CD8-positive, alpha-beta memory T cell (primary cell): ENCODE measurements at regions of chr6 and their contacts with region 1.

Region 1: DNA sequence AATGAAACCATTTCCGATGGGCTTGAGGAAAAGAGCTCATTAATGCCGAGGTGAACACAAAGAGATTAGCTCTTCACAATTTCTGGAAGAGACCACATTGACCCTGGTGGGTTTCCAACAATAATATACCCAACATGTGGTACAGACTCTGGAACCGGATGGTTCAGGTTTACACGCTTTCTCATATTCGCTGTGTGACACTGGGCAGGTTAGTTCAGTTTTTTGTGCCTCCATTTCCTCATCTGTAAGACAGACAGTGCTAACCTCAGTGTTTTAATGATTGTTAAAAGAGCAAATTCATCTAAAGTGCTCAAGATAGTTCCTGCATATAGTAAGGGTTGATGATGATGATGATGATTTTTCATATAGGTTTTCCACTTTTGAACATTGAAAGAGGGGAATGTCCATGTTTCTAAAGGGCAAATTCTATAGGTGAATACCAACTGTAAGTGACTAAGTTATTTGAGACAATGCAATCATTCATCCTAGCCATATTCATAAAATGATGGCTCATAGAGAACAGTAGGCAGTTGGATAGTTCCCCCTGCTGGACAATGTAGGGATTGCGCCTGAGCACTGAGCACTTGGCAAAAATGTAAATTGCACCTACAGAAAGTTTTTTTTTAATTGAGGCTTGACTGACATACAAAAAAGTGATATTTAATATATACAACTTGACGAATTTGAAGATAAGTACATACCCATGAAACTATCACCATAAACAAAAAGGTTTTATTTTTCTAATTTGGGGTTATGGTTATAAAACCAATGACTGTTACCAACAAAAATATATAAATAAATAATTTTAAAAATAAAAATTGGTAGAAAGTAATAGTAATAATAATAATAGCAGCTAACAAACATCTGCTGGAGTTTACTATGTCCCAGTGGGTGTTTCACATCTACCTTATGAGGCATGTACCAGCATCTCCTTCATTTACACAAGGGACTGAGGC is 2.1 kb upstream of the PERP start:
- DNase-seq: peak; percentile 59 to 78 (median 68)
- H3K4me3 ChIP-seq: no peak overlapping the region
- H3K4me3 Mint-ChIP-seq: peak overlapping the region in 3 of 7 donors; percentile 24 to 74 (median 33)
- H3K27ac ChIP-seq: no peak overlapping the region
- H3K27ac Mint-ChIP-seq: peak overlapping the region in 5 of 8 donors; percentile 1 to 70 (median 18)
- H3K4me1 ChIP-seq: peaks cover 13% of the 10 kb centered on the region
- H3K4me1 Mint-ChIP-seq: peaks cover 22 to 40% (median 22%) of the 10 kb centered on the region in 3 donors
- H3K27me3 ChIP-seq: peaks cover 10% of the 10 kb centered on the region
- H3K27me3 Mint-ChIP-seq: peaks cover 5 to 9% of the 10 kb centered on the region in 2 donors

Region 2: DNA sequence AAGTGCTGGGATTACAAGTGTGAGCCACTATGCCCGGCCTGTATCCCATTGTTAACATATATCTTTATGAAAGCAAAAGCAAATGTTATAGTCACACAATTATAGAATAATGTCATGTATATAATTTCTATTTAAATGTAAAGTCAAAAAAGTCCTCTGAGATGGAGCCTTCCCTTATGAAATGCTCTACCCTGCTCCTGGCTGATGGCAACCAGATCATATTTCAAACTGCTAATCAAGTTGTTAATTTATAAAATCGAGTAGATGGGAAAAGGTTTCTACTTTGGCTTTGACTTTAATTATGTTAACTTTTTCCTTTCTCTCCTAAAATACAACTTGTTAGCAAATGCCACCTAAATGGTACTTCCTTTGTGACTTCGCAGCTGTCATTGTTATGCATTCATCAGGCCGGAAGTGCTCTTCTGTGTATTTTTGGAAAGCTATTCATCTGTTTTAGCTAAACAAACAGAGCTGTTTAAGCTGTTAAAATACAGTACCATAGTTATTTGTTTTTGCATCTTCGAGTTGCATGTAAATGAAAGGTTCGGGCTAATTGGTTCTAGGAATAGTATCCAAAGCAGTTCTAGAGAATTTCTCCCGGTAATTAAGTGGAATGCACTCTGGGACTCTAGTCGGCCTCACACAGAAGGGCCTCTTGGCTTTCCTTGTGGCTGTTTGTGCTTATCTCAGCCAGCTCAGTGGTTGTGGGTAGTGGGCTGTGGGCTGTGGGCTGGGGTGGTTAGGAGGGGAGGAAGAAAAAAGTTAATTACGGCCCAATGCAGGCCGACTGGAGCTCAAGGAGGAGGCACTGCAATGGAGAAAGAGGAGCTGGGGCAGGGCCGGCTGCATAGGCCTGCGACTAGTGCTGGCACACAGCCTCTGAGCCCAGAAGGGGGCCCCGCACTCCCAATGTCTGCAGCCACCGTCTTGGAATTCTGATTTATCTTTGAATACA is 1152.5 kb before region 1 on chr6:
- CTCF ChIA-PET with region 1: no interaction called
- POLR2A ChIA-PET with region 1: no interaction called
- DNase-seq: no peak
- H3K4me3 ChIP-seq: no peak overlapping the region
- H3K4me3 Mint-ChIP-seq: peak overlapping the region in 1 of 7 donors; percentile 69
- H3K27ac ChIP-seq: no peak overlapping the region
- H3K27ac Mint-ChIP-seq: no peak overlapping the region
- H3K4me1 ChIP-seq: no peaks in the 10 kb centered on the region
- H3K4me1 Mint-ChIP-seq: peaks cover 0 to 5% (median 3%) of the 10 kb centered on the region in 3 donors
- H3K27me3 ChIP-seq: no peaks in the 10 kb centered on the region
- H3K27me3 Mint-ChIP-seq: peaks cover 14 to 44% of the 10 kb centered on the region in 2 donors

Region 3: DNA sequence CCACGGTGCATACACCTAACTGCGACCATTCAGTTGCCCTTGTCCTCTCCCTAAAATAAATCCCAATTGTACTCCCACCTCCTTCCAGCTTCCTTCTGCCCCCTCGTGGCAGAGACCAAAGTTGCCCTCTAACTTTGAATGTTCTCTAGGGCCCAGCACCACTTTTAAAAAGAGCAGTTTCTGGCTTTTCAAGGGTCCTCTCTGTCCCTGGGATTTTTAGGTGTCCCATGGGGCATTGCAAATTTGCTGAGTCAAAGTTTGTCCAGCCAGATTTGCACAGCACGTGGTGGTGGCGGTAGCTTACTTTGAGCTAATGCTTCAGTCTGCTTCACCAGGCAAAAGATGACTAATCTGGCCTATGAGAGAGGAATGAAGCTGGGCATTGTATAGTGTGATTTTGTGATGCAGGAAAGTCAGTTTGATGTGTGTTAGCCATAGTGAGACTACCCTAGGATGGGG is 102.3 kb before region 1 on chr6:
- CTCF ChIA-PET with region 1: interaction called, 60 read pairs
- POLR2A ChIA-PET with region 1: no interaction called
- DNase-seq: no peak
- H3K4me3 ChIP-seq: no peak overlapping the region
- H3K4me3 Mint-ChIP-seq: no peak overlapping the region
- H3K27ac ChIP-seq: no peak overlapping the region
- H3K27ac Mint-ChIP-seq: peak overlapping the region in 1 of 8 donors; percentile 8
- H3K4me1 ChIP-seq: no peaks in the 10 kb centered on the region
- H3K4me1 Mint-ChIP-seq: peaks cover under 1% of the 10 kb centered on the region in 3 donors
- H3K27me3 ChIP-seq: no peaks in the 10 kb centered on the region
- H3K27me3 Mint-ChIP-seq: peaks cover 0 to 2% of the 10 kb centered on the region in 2 donors

Region 4: DNA sequence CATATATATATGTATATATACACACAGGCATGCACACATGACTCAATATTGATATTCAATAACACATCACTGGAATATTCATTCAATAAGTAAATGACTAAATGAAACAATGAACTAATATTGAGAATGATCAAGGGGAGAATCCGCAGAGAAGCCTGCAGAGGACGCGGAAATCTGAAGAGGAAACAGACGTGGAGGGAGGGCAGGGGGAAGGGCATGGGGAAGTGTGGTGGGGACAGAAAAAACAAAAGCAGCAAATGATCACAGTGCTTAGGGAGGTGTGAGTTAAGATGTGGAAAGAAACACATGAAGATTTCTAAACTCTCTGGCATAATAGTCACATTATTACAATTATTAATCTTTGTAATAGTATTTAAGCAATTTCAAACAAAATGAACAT is 16.6 kb before region 1 on chr6:
- CTCF ChIA-PET with region 1: no interaction called
- POLR2A ChIA-PET with region 1: no interaction called
- DNase-seq: no peak
- H3K4me3 ChIP-seq: no peak overlapping the region
- H3K4me3 Mint-ChIP-seq: no peak overlapping the region
- H3K27ac ChIP-seq: no peak overlapping the region
- H3K27ac Mint-ChIP-seq: no peak overlapping the region
- H3K4me1 ChIP-seq: no peaks in the 10 kb centered on the region
- H3K4me1 Mint-ChIP-seq: no peaks in the 10 kb centered on the region
- H3K27me3 ChIP-seq: no peaks in the 10 kb centered on the region
- H3K27me3 Mint-ChIP-seq: peaks cover 0 to 1% of the 10 kb centered on the region in 2 donors

Region 5: DNA sequence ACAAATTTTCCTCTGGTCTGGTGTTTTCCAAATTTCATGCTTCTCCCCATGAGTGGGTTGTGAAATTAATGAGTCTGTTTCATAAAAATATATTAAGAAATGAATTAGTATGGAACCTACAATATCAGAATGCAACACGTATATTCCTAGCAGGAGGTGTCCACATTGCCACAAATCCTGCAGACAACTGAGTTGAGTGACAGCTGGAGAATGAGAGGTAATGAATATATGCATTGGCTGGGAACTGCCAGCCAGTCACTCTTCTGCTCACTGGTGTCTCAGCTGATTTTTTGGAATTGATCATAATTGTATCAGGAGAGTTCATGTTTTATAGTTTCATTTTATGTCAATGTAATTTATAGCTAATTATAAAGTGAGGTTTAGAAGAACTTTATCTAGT is 46.1 kb after region 1 on chr6:
- CTCF ChIA-PET with region 1: no interaction called
- POLR2A ChIA-PET with region 1: no interaction called
- DNase-seq: no peak
- H3K4me3 ChIP-seq: no peak overlapping the region
- H3K4me3 Mint-ChIP-seq: no peak overlapping the region
- H3K27ac ChIP-seq: no peak overlapping the region
- H3K27ac Mint-ChIP-seq: no peak overlapping the region
- H3K4me1 ChIP-seq: no peaks in the 10 kb centered on the region
- H3K4me1 Mint-ChIP-seq: no peaks in the 10 kb centered on the region
- H3K27me3 ChIP-seq: peaks cover 2% of the 10 kb centered on the region
- H3K27me3 Mint-ChIP-seq: peaks cover 18 to 58% of the 10 kb centered on the region in 2 donors